CD4-positive, alpha-beta memory T cell (primary cell): ENCODE measurements at regions of chr12 and their contacts with region 1.

Region 1: DNA sequence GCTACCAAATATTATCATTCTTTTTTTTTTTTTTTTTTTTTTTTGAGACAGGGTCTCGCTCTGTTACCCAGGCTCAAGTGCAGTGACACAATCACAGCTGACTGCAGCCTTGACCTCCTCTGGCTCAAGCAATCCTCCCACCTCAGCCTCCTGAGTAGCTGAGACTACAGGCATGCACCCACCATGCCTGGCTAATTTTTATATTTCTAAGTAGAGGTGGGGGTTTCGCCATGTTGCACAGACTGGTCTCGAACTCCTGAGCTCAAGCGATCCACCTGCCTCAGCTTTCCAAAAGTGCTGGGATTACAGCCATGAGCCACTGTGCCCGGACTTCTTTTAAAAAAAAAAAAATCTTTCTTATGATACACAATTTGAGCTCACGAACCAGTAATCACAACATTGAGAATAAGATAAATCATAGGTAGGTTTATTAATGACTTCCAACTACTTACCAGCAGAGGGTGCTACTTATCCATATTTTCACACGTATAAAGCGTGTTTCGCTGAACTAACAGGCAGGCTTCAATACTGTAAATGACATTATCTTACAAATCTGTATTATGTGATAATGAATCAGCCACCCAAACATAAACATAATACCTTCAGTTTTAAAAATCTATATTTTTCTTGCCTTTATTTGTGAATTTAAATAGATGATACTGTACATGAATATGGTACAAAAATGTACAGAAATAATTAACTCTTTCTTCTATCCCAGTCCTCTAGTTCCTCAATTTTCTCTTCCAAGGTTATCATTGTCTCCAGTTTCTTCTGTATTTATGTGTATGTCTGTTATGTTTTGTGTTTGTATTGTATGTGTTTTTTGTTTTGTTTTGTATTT is 42.5 kb upstream of the BCAT1 start:
- DNase-seq: peak; percentile 41 to 71 (median 67)
- H3K4me3 ChIP-seq: no peak overlapping the region
- H3K4me3 Mint-ChIP-seq: no peak overlapping the region
- H3K27ac ChIP-seq: no peak overlapping the region
- H3K27ac Mint-ChIP-seq: peak overlapping the region in 1 of 7 donors; percentile 61
- H3K4me1 ChIP-seq: no peaks in the 10 kb centered on the region
- H3K4me1 Mint-ChIP-seq: no peaks in the 10 kb centered on the region
- H3K27me3 ChIP-seq: no peaks in the 10 kb centered on the region
- H3K27me3 Mint-ChIP-seq: peaks cover 0 to 2% of the 10 kb centered on the region in 2 donors

Region 2: DNA sequence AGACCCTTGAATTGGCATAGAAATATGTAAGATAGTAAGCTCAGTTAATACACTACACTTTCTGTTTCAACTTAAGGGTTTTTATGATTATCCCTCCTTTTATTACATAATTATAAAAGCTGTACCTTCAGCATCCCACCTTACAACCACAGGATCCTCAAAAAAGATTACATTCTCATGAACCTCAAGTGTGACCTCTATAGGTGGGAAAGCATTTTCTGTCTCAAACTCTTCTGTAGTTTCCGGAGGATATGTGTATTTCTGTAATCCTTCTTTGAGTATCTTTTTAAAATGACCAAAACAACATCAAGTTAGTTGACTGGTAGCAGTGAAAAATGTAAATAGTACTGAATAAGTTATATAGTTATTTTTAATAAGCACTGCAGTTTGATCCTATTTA is 127.6 kb after region 1 on chr12:
- CTCF ChIA-PET with region 1: interaction called, 15 read pairs
- POLR2A ChIA-PET with region 1: no interaction called
- intact Hi-C with region 1: no loop called
- DNase-seq: no peak
- H3K4me3 ChIP-seq: no peak overlapping the region
- H3K4me3 Mint-ChIP-seq: no peak overlapping the region
- H3K27ac ChIP-seq: no peak overlapping the region
- H3K27ac Mint-ChIP-seq: no peak overlapping the region
- H3K4me1 ChIP-seq: no peaks in the 10 kb centered on the region
- H3K4me1 Mint-ChIP-seq: no peaks in the 10 kb centered on the region
- H3K27me3 ChIP-seq: no peaks in the 10 kb centered on the region
- H3K27me3 Mint-ChIP-seq: peaks cover 0 to 1% of the 10 kb centered on the region in 2 donors

Region 3: GRCh38 chr12:25130741-25131188 is 139.3 kb after region 1 on chr12:
- CTCF ChIA-PET with region 1: interaction called, 158 read pairs
- POLR2A ChIA-PET with region 1: no interaction called
- intact Hi-C with region 1: loop called (anchors 1 kb)
- DNase-seq: peak in 4 of 5 donors; percentile 33 to 53 (median 46)
- H3K4me3 ChIP-seq: no peak overlapping the region
- H3K4me3 Mint-ChIP-seq: no peak overlapping the region
- H3K27ac ChIP-seq: no peak overlapping the region
- H3K27ac Mint-ChIP-seq: no peak overlapping the region
- H3K4me1 ChIP-seq: no peaks in the 10 kb centered on the region
- H3K4me1 Mint-ChIP-seq: no peaks in the 10 kb centered on the region
- H3K27me3 ChIP-seq: no peaks in the 10 kb centered on the region
- H3K27me3 Mint-ChIP-seq: peaks cover 2 to 3% of the 10 kb centered on the region in 2 donors

Region 4: DNA sequence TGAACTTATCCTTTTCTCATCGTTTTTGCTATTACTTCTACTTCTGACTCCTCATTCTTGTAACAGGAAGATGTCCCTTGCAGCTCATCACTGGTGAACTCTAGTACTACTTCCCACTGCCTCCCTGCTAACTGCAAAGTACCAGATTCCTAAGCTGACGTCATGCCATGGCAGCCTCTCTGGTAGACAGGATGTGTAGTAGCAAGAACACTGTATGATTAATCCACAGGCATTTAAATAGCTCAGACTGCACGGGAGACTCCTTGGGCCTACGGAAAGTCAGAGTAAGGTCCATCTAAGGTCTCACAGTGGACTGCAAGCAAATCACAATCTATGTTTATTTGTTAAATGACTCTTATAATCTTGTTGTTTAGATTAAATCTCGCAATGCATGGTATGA is 160.0 kb after region 1 on chr12:
- CTCF ChIA-PET with region 1: interaction called, 34 read pairs
- POLR2A ChIA-PET with region 1: no interaction called
- intact Hi-C with region 1: loop called (anchors 1 kb)
- DNase-seq: no peak
- H3K4me3 ChIP-seq: no peak overlapping the region
- H3K4me3 Mint-ChIP-seq: no peak overlapping the region
- H3K27ac ChIP-seq: no peak overlapping the region
- H3K27ac Mint-ChIP-seq: peak overlapping the region in 1 of 7 donors; percentile 5
- H3K4me1 ChIP-seq: peaks cover 3% of the 10 kb centered on the region
- H3K4me1 Mint-ChIP-seq: peaks cover 0 to 8% (median 6%) of the 10 kb centered on the region in 4 donors
- H3K27me3 ChIP-seq: no peaks in the 10 kb centered on the region
- H3K27me3 Mint-ChIP-seq: no peaks in the 10 kb centered on the region

Region 5: GRCh38 chr12:26028953-26029735 is 1037.7 kb after region 1 on chr12:
- CTCF ChIA-PET with region 1: no interaction called
- POLR2A ChIA-PET with region 1: no interaction called
- intact Hi-C with region 1: loop called (anchors 5 kb)
- DNase-seq: peak in 3 of 5 donors; percentile 2 to 8 (median 2)
- H3K4me3 ChIP-seq: no peak overlapping the region
- H3K4me3 Mint-ChIP-seq: no peak overlapping the region
- H3K27ac ChIP-seq: no peak overlapping the region
- H3K27ac Mint-ChIP-seq: no peak overlapping the region
- H3K4me1 ChIP-seq: no peaks in the 10 kb centered on the region
- H3K4me1 Mint-ChIP-seq: no peaks in the 10 kb centered on the region
- H3K27me3 ChIP-seq: no peaks in the 10 kb centered on the region
- H3K27me3 Mint-ChIP-seq: peaks cover 2 to 9% of the 10 kb centered on the region in 2 donors